Heart right ventricle (tissue), 16 donors: ENCODE measurements at regions of chr10 and their contacts with region 1.

Region 1: DNA sequence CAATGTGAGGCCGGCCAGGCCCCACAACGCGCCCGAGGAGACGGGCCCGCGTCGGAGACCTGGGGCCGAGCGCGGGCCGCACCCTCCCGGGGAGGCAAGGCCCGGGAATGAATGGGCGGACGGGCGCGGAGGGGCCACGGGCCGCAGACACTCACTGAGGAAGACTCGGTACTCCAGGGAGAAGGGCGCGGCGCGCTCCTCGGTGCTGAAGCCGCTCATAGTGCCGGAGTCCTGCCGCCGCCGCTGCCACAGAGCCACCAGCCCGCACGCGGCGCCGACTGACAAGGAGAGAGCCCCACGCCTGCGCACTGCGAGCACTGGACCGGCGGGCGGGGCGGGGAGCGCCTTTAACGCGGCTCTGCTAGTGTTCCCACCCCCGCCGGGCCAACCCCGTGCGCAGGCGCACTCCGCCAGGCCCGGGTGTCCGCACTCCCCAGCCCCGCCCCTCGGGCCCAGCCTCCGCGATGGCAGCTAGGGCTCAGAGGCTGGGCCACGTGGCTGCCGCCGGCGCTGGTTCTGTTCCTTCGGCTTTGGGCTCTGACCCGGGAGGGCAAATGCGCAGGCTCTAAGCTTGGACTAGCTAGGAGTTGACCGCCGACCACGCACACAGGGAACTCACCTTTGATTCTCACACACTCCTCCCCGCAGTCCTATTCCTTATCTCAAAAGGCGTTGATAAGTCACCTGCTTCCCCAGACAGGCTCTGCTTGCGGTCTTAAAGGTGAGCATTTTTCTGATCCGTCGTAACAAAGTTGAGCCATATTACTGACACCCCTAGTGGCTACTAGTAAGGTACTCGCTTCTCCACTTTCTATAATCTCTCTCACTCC is at the start of gene PPA1:
- DNase-seq: peak; percentile 97 to 100
- ATAC-seq: peak; percentile 99 to 100 (median 99)
- H3K4me3 ChIP-seq: peak within 1 kb of the TSS; percentile 76 to 94 (median 89)
- H3K27ac ChIP-seq: peak within 1 kb of the TSS; percentile 23 to 88 (median 83)
- H3K4me1 ChIP-seq: peaks cover 0 to 46% (median 24%) of the 10 kb centered on the region in 9 donors
- H3K27me3 ChIP-seq: no peaks in the 10 kb centered on the region
- CTCF ChIP-seq: peak in 3 of 9 donors; percentile 14 to 19 (median 19)
- total RNA-seq, gene PPA1: 47.1 to 139 (median 69.9) TPM

Region 2: GRCh38 chr10:70212879-70213278 is 20.4 kb before region 1 on chr10:
- intact Hi-C with region 1: no loop called
- DNase-seq: no peak
- ATAC-seq: no peak
- H3K4me3 ChIP-seq: no peak overlapping the region
- H3K27ac ChIP-seq: no peak overlapping the region
- H3K4me1 ChIP-seq: no peaks in the 10 kb centered on the region
- H3K27me3 ChIP-seq: no peaks in the 10 kb centered on the region
- CTCF ChIP-seq: no peak

Region 3: DNA sequence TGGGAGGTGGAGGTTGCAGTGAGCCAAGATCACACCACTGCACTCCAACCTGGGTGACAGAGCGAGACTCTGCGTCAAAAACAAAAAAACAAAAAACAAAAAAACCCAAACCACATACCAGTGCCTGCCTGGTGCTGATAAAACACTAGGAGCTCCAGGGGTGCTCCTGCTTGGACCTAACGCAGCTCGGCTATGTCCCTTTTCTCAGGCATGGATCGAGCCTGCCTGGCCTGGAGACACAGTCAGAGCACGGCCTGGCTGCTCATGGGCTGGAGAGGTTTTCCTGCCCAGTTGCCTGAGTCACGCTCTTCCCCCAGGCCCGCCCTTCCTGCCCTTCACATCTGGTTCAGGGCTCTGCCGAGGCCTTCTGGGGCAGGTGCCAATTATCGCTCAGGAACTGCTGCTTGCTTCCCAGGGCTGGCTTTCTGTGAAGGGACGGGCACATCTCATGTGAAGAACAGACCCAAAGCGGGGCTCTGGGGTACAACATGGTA is 63.1 kb after region 1 on chr10:
- intact Hi-C with region 1: loop called in 1 of 10 experiments (anchors 10 kb)
- DNase-seq: peak; percentile 88 to 91
- ATAC-seq: peak; percentile 97 to 100 (median 99)
- H3K4me3 ChIP-seq: no peak overlapping the region
- H3K27ac ChIP-seq: peak overlapping the region; percentile 53 to 92 (median 85)
- H3K4me1 ChIP-seq: peaks cover 11 to 23% (median 21%) of the 10 kb centered on the region in 9 donors
- H3K27me3 ChIP-seq: no peaks in the 10 kb centered on the region
- CTCF ChIP-seq: no peak